GM12878 (cell line): ENCODE measurements at regions of chr5 and their contacts with region 1.

Region 1: GRCh38 chr5:154058055-154059038 is 19.6 kb downstream of the MFAP3 start:
- DNase-seq: peak; percentile 63
- ATAC-seq: peak; percentile 88
- H3K4me3 ChIP-seq: no peak overlapping the region
- H3K27ac ChIP-seq: peak overlapping the region; percentile 52
- H3K4me1 ChIP-seq: peaks cover 23% of the 10 kb centered on the region
- H3K27me3 ChIP-seq: no peaks in the 10 kb centered on the region
- CTCF ChIP-seq: no peak
- EP300 ChIP-seq: no peak
- POLR2A ChIP-seq: no peak
- RAD21 ChIP-seq: no peak

Region 2: GRCh38 chr5:153926201-153926600 is 132.1 kb before region 1 on chr5:
- CTCF ChIA-PET with region 1: no interaction called
- POLR2A ChIA-PET with region 1: no interaction called
- RAD21 ChIA-PET with region 1: no interaction called
- SMC1A ChIA-PET with region 1: no interaction called
- in situ Hi-C with region 1: no loop called
- intact Hi-C with region 1: loop called (anchors 5 kb)
- DNase-seq: no peak
- ATAC-seq: no peak
- H3K4me3 ChIP-seq: no peak overlapping the region
- H3K27ac ChIP-seq: no peak overlapping the region
- H3K4me1 ChIP-seq: no peaks in the 10 kb centered on the region
- H3K27me3 ChIP-seq: no peaks in the 10 kb centered on the region; a peak in 1 of 4 replicates
- CTCF ChIP-seq: no peak
- EP300 ChIP-seq: no peak
- POLR2A ChIP-seq: no peak
- RAD21 ChIP-seq: no peak

Region 3: DNA sequence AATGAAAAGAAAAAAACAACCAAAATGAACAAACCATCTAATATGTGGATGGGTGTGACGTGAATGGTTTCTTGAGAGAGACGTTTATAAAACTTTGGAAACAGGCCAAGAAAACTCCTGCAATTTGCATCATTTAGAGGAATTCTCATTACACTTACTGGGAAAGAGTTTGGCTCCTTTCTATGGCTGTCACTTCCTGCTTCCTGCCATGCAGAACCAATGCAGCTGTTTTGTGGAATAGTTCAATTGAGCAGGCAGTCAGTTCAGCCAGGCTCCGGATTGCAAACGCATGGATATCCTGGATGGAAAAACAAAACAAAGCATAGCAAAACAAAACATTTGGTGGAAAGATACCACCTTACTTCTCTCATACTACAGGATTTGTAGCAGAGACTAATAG is 56.3 kb before region 1 on chr5:
- CTCF ChIA-PET with region 1: no interaction called
- POLR2A ChIA-PET with region 1: no interaction called
- RAD21 ChIA-PET with region 1: no interaction called
- SMC1A ChIA-PET with region 1: no interaction called
- in situ Hi-C with region 1: no loop called
- intact Hi-C with region 1: no loop called
- DNase-seq: no peak
- ATAC-seq: no peak
- H3K4me3 ChIP-seq: no peak overlapping the region
- H3K27ac ChIP-seq: no peak overlapping the region
- H3K4me1 ChIP-seq: no peaks in the 10 kb centered on the region
- H3K27me3 ChIP-seq: no peaks in the 10 kb centered on the region
- CTCF ChIP-seq: no peak
- EP300 ChIP-seq: no peak
- POLR2A ChIP-seq: no peak
- RAD21 ChIP-seq: no peak